ENCODE measurements at regions of chr19 and their contacts with region 1.

Region 1: GRCh38 chr19:11435058-11435832 is at the starts of genes ODAD3 and PRKCSH:
- DNase-seq: peak; percentile 94 to 99 (median 97)
- ATAC-seq: peak; percentile 95
- H3K4me3 ChIP-seq: peak within 1 kb of the TSS; percentile 97 to 98
- H3K4me3 Mint-ChIP-seq: peak within 1 kb of the TSS; percentile 99
- H3K27ac ChIP-seq: peak within 1 kb of the TSS; percentile 77 to 84
- H3K27ac Mint-ChIP-seq: peak within 1 kb of the TSS; percentile 95
- H3K4me1 ChIP-seq: peaks cover 16% of the 10 kb centered on the region
- H3K4me1 Mint-ChIP-seq: peaks cover 25% of the 10 kb centered on the region
- H3K27me3 ChIP-seq: no peaks in the 10 kb centered on the region
- H3K27me3 Mint-ChIP-seq: peaks cover 2% of the 10 kb centered on the region
- CTCF ChIP-seq: peak; percentile 92
- total RNA-seq, gene ODAD3: not detected
- total RNA-seq, gene PRKCSH: 253 to 255 TPM

Region 2: GRCh38 chr19:11346092-11346940 is 88.9 kb before region 1 on chr19 and contains the starts of genes CCDC159 and TMEM205:
- CTCF ChIA-PET with region 1: interaction called, 5 read pairs
- POLR2A ChIA-PET with region 1: no interaction called
- intact Hi-C with region 1: loop called (anchors 1 kb)
- DNase-seq: peak; percentile 96 to 100 (median 98)
- ATAC-seq: peak; percentile 95
- H3K4me3 ChIP-seq: peak within 1 kb of the TSS; percentile 96 to 100
- H3K4me3 Mint-ChIP-seq: peak within 1 kb of the TSS; percentile 93
- H3K27ac ChIP-seq: peak within 1 kb of the TSS; percentile 73 to 77
- H3K27ac Mint-ChIP-seq: peak within 1 kb of the TSS; percentile 88
- H3K4me1 ChIP-seq: peaks cover 17% of the 10 kb centered on the region
- H3K4me1 Mint-ChIP-seq: peaks cover 27% of the 10 kb centered on the region
- H3K27me3 ChIP-seq: no peaks in the 10 kb centered on the region
- H3K27me3 Mint-ChIP-seq: no peaks in the 10 kb centered on the region
- CTCF ChIP-seq: no peak
- total RNA-seq, gene CCDC159: 26.9 to 36.4 TPM
- total RNA-seq, gene TMEM205: 6.5 to 10.6 TPM

Region 3: DNA sequence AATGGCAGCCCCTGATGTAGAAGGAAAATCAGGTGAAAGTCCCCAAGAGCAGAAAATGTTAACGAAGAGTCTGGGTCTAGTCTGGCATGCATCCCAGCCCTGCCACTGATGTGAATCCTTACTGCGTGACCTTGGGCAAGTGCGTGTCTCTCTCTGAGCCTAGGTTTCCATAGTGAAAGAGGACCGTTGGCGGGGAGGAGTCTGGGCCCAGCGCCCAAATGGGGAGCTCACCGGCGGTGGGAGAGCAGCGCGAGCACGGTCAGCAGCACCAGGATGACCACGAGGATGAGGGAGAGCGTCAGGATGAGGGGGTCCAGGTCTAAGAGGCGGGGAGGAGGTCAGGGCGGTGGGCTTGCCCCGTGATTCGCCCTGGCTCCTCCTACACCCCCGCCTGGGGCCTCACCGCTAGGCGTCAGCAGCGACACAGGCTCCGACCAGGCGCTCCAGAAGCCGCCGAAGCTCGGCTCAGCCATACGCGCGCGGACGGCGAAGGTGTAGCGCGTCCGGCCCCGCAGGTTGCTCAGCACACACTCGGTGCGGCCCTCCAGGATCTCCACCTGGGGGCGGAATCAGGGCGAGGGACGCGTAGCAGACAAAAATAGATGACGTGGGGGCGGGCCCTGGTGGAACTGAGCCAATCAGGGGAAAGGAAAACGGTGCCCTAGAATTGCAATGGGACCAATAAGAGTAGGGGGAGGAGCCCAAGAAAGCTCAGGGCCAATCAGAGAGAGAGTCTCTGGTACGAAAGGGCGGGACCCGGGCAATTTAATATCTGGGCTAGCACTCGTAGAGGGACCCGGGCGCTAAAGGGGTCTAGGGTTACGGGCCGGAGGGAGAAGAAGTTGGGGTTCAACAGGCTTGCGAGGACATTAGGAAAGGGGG is 54.4 kb before region 1 on chr19:
- CTCF ChIA-PET with region 1: interaction called, 6 read pairs
- POLR2A ChIA-PET with region 1: interaction called, 4 read pairs
- intact Hi-C with region 1: loop called (anchors 1 kb)
- DNase-seq: peak; percentile 93 to 99 (median 96)
- ATAC-seq: peak; percentile 83
- H3K4me3 ChIP-seq: peak overlapping the region; percentile 64 to 72
- H3K4me3 Mint-ChIP-seq: peak overlapping the region; percentile 94
- H3K27ac ChIP-seq: peak overlapping the region; percentile 80 to 89
- H3K27ac Mint-ChIP-seq: peak overlapping the region; percentile 99
- H3K4me1 ChIP-seq: peaks cover 47% of the 10 kb centered on the region
- H3K4me1 Mint-ChIP-seq: peaks cover 45% of the 10 kb centered on the region
- H3K27me3 ChIP-seq: peaks cover 6 to 23% of the 10 kb centered on the region in 2 experiments
- H3K27me3 Mint-ChIP-seq: peaks cover 19% of the 10 kb centered on the region
- CTCF ChIP-seq: peak; percentile 88

Region 4: DNA sequence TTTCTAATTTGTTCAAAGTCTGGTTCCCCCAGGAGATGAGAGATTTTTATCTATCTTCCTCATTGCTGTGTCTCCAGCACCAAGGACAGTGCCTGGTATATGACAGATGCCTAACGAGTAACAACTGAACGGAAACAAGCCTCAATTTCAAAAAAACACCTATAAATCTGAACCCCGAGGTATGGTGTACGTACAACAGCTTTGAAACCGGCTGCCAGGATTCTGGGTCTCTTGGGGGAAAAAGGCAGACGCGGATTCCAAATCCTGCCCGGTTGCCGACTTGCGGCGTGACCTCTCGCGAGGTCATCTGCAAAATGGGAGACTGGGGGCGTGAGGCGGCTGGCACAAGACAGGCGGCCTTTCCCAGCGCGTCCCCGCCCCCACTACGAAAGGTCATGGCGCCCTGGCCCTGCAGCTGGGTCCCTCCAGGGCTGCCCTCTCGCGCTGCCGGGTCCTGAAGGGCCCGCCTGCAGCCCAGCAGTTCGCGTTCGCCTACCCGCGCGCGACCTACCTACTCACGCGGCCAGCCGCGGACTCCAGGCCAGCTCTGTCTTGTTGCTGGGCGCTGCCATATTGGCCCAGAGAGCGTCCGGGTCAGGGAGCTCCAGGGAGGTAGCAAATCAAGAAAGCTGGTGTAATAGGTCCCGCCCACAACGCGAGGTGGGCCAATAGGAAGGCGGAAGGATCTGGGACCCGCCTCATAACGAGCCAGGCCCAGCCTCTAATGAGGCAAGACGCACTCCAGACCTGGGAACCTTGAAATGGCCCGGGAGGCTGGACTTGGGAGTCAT is 93.5 kb after region 1 on chr19 and contains the start of gene ECSIT:
- CTCF ChIA-PET with region 1: no interaction called
- POLR2A ChIA-PET with region 1: no interaction called
- intact Hi-C with region 1: loop called in 1 of 2 experiments (anchors 1 kb)
- DNase-seq: peak; percentile 83 to 96 (median 91)
- ATAC-seq: peak; percentile 98
- H3K4me3 ChIP-seq: peak within 1 kb of the TSS; percentile 85 to 92
- H3K4me3 Mint-ChIP-seq: peak within 1 kb of the TSS; percentile 97
- H3K27ac ChIP-seq: peak within 1 kb of the TSS; percentile 62 to 89
- H3K27ac Mint-ChIP-seq: peak within 1 kb of the TSS; percentile 96
- H3K4me1 ChIP-seq: peaks cover 19% of the 10 kb centered on the region
- H3K4me1 Mint-ChIP-seq: peaks cover 16% of the 10 kb centered on the region
- H3K27me3 ChIP-seq: no peaks in the 10 kb centered on the region
- H3K27me3 Mint-ChIP-seq: no peaks in the 10 kb centered on the region
- CTCF ChIP-seq: no peak
- total RNA-seq, gene ECSIT: 31.1 to 32.4 TPM

Region 5: GRCh38 chr19:11597202-11598102 is 162.2 kb after region 1 on chr19 and contains the start of gene ZNF627:
- CTCF ChIA-PET with region 1: no interaction called
- POLR2A ChIA-PET with region 1: no interaction called
- intact Hi-C with region 1: loop called in 1 of 2 experiments (anchors 1 kb)
- DNase-seq: peak; percentile 94 to 99 (median 98)
- ATAC-seq: peak; percentile 99
- H3K4me3 ChIP-seq: peak within 1 kb of the TSS; percentile 97 to 98
- H3K4me3 Mint-ChIP-seq: peak within 1 kb of the TSS; percentile 88
- H3K27ac ChIP-seq: peak within 1 kb of the TSS; percentile 89
- H3K27ac Mint-ChIP-seq: peak within 1 kb of the TSS; percentile 92
- H3K4me1 ChIP-seq: peaks cover 16% of the 10 kb centered on the region
- H3K4me1 Mint-ChIP-seq: peaks cover 32% of the 10 kb centered on the region
- H3K27me3 ChIP-seq: no peaks in the 10 kb centered on the region
- H3K27me3 Mint-ChIP-seq: no peaks in the 10 kb centered on the region
- CTCF ChIP-seq: no peak
- total RNA-seq, gene ZNF627: 10.7 to 11.0 TPM